Activated B cell treated with CpG ODN at 0.5 μM for 24 hours (primary cell): ENCODE measurements at regions of chr1 and their contacts with region 1.

Region 1: GRCh38 chr1:62783723-62784508 is at the start of gene ATG4C:
- DNase-seq: peak; percentile 79
- ATAC-seq: peak; percentile 94
- H3K4me3 Mint-ChIP-seq: no peak within 1 kb of the TSS
- H3K27ac Mint-ChIP-seq: no peak within 1 kb of the TSS
- H3K4me1 Mint-ChIP-seq: peaks cover 20% of the 10 kb centered on the region
- H3K27me3 Mint-ChIP-seq: no peaks in the 10 kb centered on the region
- CTCF ChIP-seq: no peak
- total RNA-seq, gene ATG4C: 24.2 and 28.4 TPM in 2 replicates

Region 2: DNA sequence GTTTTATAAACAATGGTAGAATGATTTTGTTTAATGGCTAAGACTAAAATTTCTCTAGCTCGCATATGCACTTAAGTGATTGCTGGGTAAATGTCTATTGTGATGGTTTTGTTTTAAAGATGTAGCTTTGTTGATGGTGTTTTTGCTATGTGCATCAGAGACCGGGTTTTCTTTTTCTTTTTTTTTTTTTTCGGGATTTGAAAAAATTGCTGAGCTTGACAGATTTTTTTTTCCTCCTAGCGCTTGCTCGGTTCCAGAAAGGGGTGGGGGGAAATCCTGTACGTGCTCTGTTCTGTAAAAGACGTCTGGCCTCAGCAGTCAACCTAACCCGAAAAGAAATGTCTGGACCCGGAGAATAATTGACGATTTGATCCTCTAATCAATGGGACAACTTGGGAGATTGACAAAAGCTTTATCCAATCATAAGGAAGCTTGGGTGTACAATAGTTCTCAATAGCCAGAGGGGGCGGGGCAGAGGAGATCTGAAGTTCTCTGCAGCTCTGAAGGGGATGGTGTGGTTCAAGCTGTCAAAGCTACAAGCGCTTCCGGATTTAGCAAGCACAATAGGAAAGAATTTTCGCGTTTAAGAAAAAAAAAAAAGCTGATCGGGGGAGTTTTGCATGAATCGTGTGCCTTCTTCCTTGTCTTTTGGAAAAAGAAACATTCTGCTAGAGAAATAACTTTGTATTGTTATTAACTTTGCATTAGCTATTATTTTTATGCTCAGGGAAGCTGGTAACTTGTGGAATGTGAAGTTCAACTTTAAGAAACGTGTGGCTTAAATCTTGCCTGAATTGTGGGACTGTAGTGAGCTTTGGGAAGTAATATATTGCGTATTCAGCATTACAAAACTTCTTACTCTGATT is 1706.0 kb before region 1 on chr1:
- CTCF ChIA-PET with region 1: no interaction called
- POLR2A ChIA-PET with region 1: no interaction called
- intact Hi-C with region 1: loop called (anchors 10 kb)
- DNase-seq: peak; percentile 38
- ATAC-seq: peak; percentile 62
- H3K4me3 Mint-ChIP-seq: peak overlapping the region; percentile 95
- H3K27ac Mint-ChIP-seq: peak overlapping the region; percentile 90
- H3K4me1 Mint-ChIP-seq: peaks cover 32% of the 10 kb centered on the region
- H3K27me3 Mint-ChIP-seq: peaks cover 33% of the 10 kb centered on the region
- CTCF ChIP-seq: no peak

Region 3: DNA sequence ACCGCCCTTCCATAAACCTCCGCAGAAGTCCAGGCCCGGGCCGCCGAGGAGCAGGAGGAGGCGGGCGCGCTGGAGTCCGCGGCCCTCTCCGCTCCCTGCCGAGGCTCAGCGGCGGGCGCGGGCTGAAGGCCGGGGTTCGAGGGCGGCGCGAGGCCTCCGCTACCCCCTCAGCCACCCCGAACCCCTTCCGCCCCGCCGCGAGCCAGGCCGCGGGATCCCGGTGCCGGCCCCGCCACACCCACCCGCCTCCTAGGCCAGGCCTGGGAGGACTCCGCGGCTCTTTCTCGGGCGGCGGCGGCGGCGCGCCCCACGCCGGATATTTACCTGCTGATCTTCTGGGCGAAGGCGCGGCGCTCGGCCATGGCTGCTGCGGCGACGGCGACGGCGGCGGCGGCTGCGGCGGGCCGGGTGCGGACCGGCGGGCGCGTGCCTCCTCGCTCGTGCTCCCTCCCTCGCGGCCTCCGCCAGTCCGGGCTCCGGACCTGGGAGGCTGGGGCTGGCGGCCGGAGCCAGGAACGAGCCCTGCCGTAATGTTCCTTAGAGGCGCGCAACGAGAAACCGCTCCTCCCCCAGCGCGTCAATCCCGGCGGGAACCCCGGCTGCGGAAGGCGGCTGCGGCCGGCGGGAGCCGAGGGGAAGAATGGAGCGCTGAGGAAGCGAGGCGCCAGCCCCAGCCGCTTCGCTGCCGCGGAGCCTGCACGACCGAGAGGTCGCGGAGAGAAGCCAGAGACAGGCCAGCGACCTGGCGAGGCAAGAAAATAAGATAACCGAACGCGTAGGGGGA is 95.8 kb before region 1 on chr1 and contains the start of gene DOCK7:
- CTCF ChIA-PET with region 1: no interaction called
- POLR2A ChIA-PET with region 1: no interaction called
- intact Hi-C with region 1: loop called (anchors 1 kb)
- DNase-seq: peak; percentile 55
- ATAC-seq: peak; percentile 72
- H3K4me3 Mint-ChIP-seq: peak within 1 kb of the TSS; percentile 89
- H3K27ac Mint-ChIP-seq: peak within 1 kb of the TSS; percentile 76
- H3K4me1 Mint-ChIP-seq: peaks cover 23% of the 10 kb centered on the region
- H3K27me3 Mint-ChIP-seq: no peaks in the 10 kb centered on the region
- CTCF ChIP-seq: no peak
- total RNA-seq, gene DOCK7: 13.4 and 18.0 TPM in 2 replicates

Region 4: GRCh38 chr1:62800825-62801306 is 16.9 kb after region 1 on chr1:
- CTCF ChIA-PET with region 1: no interaction called
- POLR2A ChIA-PET with region 1: interaction called, 33 read pairs
- intact Hi-C with region 1: loop called (anchors 1 kb)
- DNase-seq: no peak
- ATAC-seq: peak; percentile 98
- H3K4me3 Mint-ChIP-seq: peak overlapping the region; percentile 78
- H3K27ac Mint-ChIP-seq: peak overlapping the region; percentile 95
- H3K4me1 Mint-ChIP-seq: peaks cover 61% of the 10 kb centered on the region
- H3K27me3 Mint-ChIP-seq: no peaks in the 10 kb centered on the region
- CTCF ChIP-seq: no peak

Region 5: GRCh38 chr1:62841587-62842169 is 57.8 kb after region 1 on chr1:
- CTCF ChIA-PET with region 1: interaction called, 5 read pairs
- POLR2A ChIA-PET with region 1: interaction called, 4 read pairs
- intact Hi-C with region 1: loop called (anchors 1 kb)
- DNase-seq: no peak
- ATAC-seq: peak; percentile 49
- H3K4me3 Mint-ChIP-seq: no peak overlapping the region
- H3K27ac Mint-ChIP-seq: no peak overlapping the region
- H3K4me1 Mint-ChIP-seq: peaks cover 3% of the 10 kb centered on the region
- H3K27me3 Mint-ChIP-seq: no peaks in the 10 kb centered on the region
- CTCF ChIP-seq: peak; percentile 31

Region 6: DNA sequence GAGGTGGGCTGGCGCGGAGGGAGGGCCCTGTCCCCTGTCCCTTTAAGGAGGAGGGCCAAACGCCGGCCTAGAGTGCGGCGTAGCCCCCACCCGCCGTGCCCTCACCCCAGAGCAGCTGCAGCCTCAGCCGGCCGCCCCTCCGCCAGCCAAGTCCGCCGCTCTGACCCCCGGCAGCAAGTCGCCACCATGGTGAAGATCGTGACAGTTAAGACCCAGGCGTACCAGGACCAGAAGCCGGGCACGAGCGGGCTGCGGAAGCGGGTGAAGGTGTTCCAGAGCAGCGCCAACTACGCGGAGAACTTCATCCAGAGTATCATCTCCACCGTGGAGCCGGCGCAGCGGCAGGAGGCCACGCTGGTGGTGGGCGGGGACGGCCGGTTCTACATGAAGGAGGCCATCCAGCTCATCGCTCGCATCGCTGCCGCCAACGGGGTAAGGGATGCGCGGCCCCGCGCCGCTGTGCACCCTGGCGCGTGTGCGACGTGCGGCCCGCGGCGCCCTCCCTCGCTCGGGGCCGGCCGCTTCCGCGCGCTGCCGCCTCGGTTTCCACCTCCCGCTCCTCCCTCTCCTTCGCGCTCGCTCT is 809.5 kb after region 1 on chr1 and contains the start of gene PGM1:
- CTCF ChIA-PET with region 1: no interaction called
- POLR2A ChIA-PET with region 1: no interaction called
- intact Hi-C with region 1: loop called (anchors 5 kb)
- DNase-seq: peak; percentile 67
- ATAC-seq: peak; percentile 79
- H3K4me3 Mint-ChIP-seq: peak within 1 kb of the TSS; percentile 97
- H3K27ac Mint-ChIP-seq: peak within 1 kb of the TSS; percentile 92
- H3K4me1 Mint-ChIP-seq: peaks cover 14% of the 10 kb centered on the region
- H3K27me3 Mint-ChIP-seq: no peaks in the 10 kb centered on the region
- CTCF ChIP-seq: no peak
- total RNA-seq, gene PGM1: 20.6 and 20.8 TPM in 2 replicates